ENCODE measurements at regions of chr4 and their contacts with region 1.

Region 1: DNA sequence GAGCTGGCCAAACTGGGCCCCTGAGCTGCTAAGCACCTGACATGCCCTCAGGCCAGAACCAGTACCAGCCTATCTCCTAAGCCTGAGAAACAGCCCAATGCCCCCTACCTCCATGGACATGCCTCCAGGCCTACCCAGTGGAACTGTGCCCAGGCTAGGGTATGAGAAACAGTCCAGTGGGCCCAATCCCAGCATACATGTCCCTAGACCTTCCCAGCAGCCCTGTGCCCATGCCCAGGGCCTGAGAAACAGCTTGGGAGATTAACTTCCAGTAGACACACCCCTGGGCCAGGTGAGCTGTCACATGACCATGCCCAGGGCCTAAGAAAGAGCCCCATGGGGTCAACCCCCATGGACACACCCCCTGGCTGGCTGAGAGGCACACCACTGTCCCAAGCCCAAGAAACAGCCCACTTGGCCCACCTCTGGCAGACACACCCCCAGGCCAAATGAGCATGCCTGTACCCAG is 78.8 kb downstream of the CBR4 start:
- DNase-seq: no peak
- H3K4me3 ChIP-seq: no peak overlapping the region
- H3K27ac ChIP-seq: no peak overlapping the region
- H3K4me1 ChIP-seq: no peaks in the 10 kb centered on the region
- H3K27me3 ChIP-seq: no peaks in the 10 kb centered on the region
- CTCF ChIP-seq: no peak
- POLR2A ChIP-seq: no peak

Region 2: GRCh38 chr4:168981460-168981859 is 50.2 kb after region 1 on chr4:
- intact Hi-C with region 1: loop called (anchors 10 kb)
- DNase-seq: no peak
- H3K4me3 ChIP-seq: no peak overlapping the region
- H3K27ac ChIP-seq: no peak overlapping the region
- H3K4me1 ChIP-seq: no peaks in the 10 kb centered on the region
- H3K27me3 ChIP-seq: no peaks in the 10 kb centered on the region
- CTCF ChIP-seq: no peak
- POLR2A ChIP-seq: no peak

Region 3: DNA sequence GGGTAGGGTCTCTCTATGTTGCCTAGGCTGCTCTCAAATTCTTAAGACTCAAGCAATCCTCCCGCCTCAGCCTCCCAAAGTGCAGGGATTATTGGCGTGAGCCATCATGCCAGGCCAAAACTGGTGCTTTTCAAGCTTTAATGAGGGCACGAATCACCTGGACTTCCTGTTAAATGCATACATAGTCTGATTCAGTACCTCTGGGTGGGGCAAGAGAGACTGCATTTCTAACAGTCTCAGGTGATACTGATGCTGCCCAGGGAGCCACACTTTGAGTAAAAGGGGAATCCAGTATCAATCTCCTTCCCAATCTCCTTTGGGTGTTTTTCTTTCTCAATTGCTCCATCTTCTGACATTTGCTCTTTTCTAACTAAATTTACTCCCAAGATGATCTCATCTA is 243.0 kb after region 1 on chr4:
- intact Hi-C with region 1: no loop called
- DNase-seq: no peak
- H3K4me3 ChIP-seq: no peak overlapping the region
- H3K27ac ChIP-seq: peak overlapping the region in 1 of 3 donors; percentile 5
- H3K4me1 ChIP-seq: peaks cover 46 to 61% of the 10 kb centered on the region in 2 donors
- H3K27me3 ChIP-seq: no peaks in the 10 kb centered on the region
- CTCF ChIP-seq: no peak
- POLR2A ChIP-seq: no peak

Region 4: DNA sequence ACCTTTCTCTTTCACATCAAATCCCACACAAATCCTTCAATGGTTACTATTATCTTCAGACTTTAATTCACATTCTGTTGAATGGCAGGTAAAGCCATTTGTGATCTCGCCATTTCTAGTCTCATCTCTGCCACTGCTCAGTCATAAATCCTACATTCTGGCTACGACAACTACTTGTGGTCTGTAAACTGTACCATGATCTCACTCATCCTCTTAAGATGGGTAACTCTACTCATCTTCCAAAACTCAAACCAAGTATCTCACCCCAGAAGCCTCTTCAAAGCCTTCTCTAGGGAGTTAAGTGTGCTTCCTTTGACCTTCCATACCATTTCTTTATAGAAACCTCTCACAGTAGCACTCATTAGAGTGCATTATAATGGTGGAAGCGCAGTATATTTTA is 579.4 kb after region 1 on chr4:
- intact Hi-C with region 1: no loop called
- DNase-seq: no peak
- H3K4me3 ChIP-seq: no peak overlapping the region
- H3K27ac ChIP-seq: no peak overlapping the region
- H3K4me1 ChIP-seq: no peaks in the 10 kb centered on the region
- H3K27me3 ChIP-seq: no peaks in the 10 kb centered on the region
- CTCF ChIP-seq: no peak
- POLR2A ChIP-seq: no peak

Measured in thyroid gland (tissue), 4 donors.